Right ventricle myocardium superior (tissue), 1 donor: ENCODE measurements at regions of chr12 and their contacts with region 1.

Region 1: GRCh38 chr12:69527506-69528272 is 57.5 kb downstream of the FRS2 start:
- DNase-seq: no peak
- ATAC-seq: peak; percentile 12

Region 2: GRCh38 chr12:69470189-69471075 is 57.3 kb before region 1 on chr12 and contains the start of gene FRS2:
- intact Hi-C with region 1: loop called (anchors 10 kb)
- DNase-seq: peak; percentile 94
- ATAC-seq: peak; percentile 99
- total RNA-seq, gene FRS2: 18.0 TPM

Region 3: GRCh38 chr12:69585189-69586062 is 57.7 kb after region 1 on chr12 and contains the start of gene CCT2:
- intact Hi-C with region 1: no loop called
- DNase-seq: peak; percentile 99
- ATAC-seq: peak; percentile 100
- total RNA-seq, gene CCT2: 84.8 TPM